Sciatic nerve (tissue), 2 donors: ENCODE measurements at regions of chr4 and their contacts with region 1.

Region 1: GRCh38 chr4:48594180-48594579 is 104.1 kb downstream of the ZAR1 start:
- DNase-seq: no peak
- ATAC-seq: no peak

Region 2: DNA sequence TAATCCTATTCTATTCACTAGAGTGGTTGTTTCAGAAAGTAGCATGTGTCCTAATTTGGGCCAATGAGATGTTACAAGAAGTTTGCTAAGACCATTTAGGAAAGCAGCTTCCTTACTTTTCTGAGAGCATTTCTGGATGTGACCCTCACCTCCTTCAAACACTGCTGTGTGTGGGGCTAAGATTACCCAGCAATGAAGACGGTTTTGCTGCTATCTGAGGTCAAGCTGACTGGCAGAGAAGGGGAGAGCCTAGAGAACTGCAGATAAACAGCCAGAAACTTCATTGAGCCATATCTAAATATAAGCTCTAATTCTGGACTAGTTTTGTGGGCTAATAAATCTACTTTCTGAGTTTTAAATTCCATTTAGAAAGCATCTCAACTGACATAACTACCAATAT is 67.8 kb before region 1 on chr4:
- intact Hi-C with region 1: loop called (anchors 2 kb)
- DNase-seq: no peak
- ATAC-seq: no peak

Region 3: GRCh38 chr4:48546336-48546735 is 47.8 kb before region 1 on chr4:
- intact Hi-C with region 1: no loop called
- DNase-seq: no peak
- ATAC-seq: no peak